Head of caudate nucleus (tissue), 42 donors: ENCODE measurements at regions of chr9 and their contacts with region 1.

Region 1: DNA sequence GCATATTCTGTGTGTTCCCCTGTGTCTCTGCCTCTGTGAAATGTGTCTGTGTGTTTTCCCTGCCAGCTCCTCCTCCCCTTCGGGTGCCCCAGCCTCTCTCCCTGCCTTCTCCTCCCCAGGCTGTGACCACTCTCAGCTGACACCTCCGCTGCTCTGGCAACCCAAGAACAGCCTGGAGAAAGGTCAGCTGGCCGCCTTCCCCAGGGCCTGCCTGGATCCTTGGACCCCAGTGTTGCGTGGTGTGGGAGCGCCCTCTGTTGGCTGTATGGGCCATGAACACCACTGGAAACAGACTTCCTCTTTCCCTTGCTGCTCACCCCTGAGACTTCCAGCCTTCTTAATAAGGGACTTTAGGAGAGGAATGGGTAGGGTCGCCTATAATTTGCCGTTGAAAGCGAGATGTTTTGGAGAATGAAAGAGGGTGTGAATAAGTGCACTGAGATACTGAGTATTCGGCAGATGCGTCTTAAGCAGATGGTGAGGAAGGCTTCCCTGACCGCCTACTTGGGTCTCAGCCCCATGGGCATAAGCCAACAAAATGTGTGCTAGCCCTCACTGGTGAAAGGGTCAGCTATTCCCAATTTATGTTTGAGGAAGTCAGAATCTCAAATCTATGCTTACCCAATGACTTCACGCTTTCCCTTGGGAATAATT is 114.9 kb upstream of the TRIM32 start:
- DNase-seq: peak; percentile 33 to 90 (median 78)

Region 2: DNA sequence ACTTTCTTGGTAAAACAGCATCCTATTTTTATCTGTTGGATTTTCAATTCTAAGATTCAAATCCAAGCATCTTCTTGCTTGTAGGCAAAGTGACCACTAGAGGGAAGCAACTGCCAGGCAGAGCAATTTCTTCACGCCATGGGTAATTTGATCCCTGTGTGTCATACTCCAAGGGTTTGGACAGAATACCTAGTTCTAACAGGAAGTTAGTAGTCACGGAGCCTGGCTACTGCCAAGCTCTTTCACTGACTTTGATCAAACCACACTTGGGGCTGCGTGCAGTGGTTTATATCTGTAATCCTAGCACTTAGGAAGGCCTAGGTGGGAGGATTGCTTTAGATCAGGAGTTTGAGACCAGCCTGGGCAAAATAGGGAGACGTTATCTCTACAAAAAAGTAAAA is 980.6 kb before region 1 on chr9:
- intact Hi-C with region 1: loop called (anchors 5 kb)
- DNase-seq: peak in 33 of 42 donors; percentile 3 to 73 (median 37)

Region 3: DNA sequence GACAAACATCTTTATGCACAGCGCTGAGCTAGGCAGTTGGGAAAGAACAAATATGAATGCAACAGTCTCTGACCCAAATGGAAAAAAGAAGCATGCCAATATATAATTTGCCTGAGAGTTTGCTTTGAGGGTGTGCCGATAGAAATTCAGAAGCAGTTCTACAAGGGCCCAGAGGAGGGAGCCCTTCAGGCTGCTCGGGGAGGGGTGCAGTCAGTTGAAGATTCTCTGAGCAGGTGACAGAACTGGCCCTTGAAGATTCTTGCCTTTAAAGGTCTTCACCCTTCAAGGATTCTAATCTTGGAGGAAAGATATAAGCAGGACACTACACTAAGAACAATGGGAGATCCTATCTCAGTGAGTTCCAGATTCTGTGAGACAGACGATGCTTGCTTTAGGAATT is 422.4 kb before region 1 on chr9:
- intact Hi-C with region 1: loop called (anchors 10 kb)
- DNase-seq: peak in 12 of 42 donors; percentile 8 to 63 (median 26)

Region 4: GRCh38 chr9:116656501-116656971 is 84.3 kb after region 1 on chr9:
- intact Hi-C with region 1: loop called (anchors 5 kb)
- DNase-seq: peak in 14 of 42 donors; percentile 2 to 51 (median 10)